ENCODE measurements at regions of chr11 and their contacts with region 1.

Region 1: GRCh38 chr11:64269380-64270234 is 14.9 kb downstream of the BAD start:
- DNase-seq: peak; percentile 98 to 100 (median 99)
- H3K4me3 ChIP-seq: peak overlapping the region; percentile 61 to 95 (median 67)
- H3K4me3 Mint-ChIP-seq: peak overlapping the region; percentile 94 to 98
- H3K27ac ChIP-seq: peak overlapping the region; percentile 84 to 97
- H3K27ac Mint-ChIP-seq: peak overlapping the region; percentile 96 to 99 (median 98)
- H3K4me1 ChIP-seq: peaks cover 29 to 34% of the 10 kb centered on the region in 2 donors
- H3K4me1 Mint-ChIP-seq: peaks cover 29% of the 10 kb centered on the region
- H3K27me3 ChIP-seq: no peaks in the 10 kb centered on the region
- H3K27me3 Mint-ChIP-seq: no peaks in the 10 kb centered on the region
- CTCF ChIP-seq: peak; percentile 17

Region 2: GRCh38 chr11:64284048-64284961 is 14.7 kb after region 1 on chr11 and contains the start of gene BAD:
- intact Hi-C with region 1: loop called (anchors 1 to 2 kb)
- DNase-seq: peak; percentile 91 to 93 (median 92)
- H3K4me3 ChIP-seq: peak within 1 kb of the TSS; percentile 74 to 98 (median 81)
- H3K4me3 Mint-ChIP-seq: peak within 1 kb of the TSS; percentile 86 to 90
- H3K27ac ChIP-seq: peak within 1 kb of the TSS; percentile 91 to 100
- H3K27ac Mint-ChIP-seq: peak within 1 kb of the TSS; percentile 92 to 98 (median 96)
- H3K4me1 ChIP-seq: peaks cover 20 to 24% of the 10 kb centered on the region in 2 donors
- H3K4me1 Mint-ChIP-seq: peaks cover 24% of the 10 kb centered on the region
- H3K27me3 ChIP-seq: no peaks in the 10 kb centered on the region
- H3K27me3 Mint-ChIP-seq: peaks cover under 1 to 10% (median 2%) of the 10 kb centered on the region in 3 donors
- CTCF ChIP-seq: no peak
- polyA plus RNA-seq, gene BAD: 21.1 to 63.2 (median 48.7) TPM

Measured in CD14-positive monocyte (primary cell).